OCI-LY7 (cell line): ENCODE measurements at regions of chr1 and their contacts with region 1.

Region 1: DNA sequence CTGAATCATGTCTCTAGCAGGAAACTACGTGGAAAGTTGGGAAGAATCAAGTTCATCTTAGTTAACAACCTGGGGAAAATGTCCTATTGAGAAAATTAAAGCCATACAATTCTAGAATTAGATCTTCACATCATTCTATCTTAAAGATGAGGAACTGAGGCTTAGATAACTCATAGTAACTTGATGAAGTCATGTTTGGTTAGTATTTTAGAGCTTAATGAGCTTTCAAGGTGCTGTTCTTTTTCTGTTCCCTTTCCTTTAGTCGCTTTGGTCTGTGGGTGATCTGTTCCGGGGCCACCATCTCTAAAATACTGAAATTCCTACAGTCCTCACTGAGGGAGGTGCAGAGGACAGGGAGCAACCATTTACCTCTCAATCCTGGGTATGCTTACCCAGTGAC is 4.3 kb upstream of the GLUL start:
- DNase-seq: no peak
- H3K4me3 ChIP-seq: no peak overlapping the region
- H3K27ac ChIP-seq: no peak overlapping the region
- H3K4me1 ChIP-seq: no peaks in the 10 kb centered on the region
- CTCF ChIP-seq: no peak

Region 2: GRCh38 chr1:182084487-182085316 is 311.2 kb before region 1 on chr1:
- CTCF ChIA-PET with region 1: interaction called, 5 read pairs
- POLR2A ChIA-PET with region 1: no interaction called
- intact Hi-C with region 1: loop called (anchors 1 kb)
- DNase-seq: peak; percentile 47
- H3K4me3 ChIP-seq: no peak overlapping the region
- H3K27ac ChIP-seq: no peak overlapping the region
- H3K4me1 ChIP-seq: no peaks in the 10 kb centered on the region
- CTCF ChIP-seq: peak; percentile 69

Region 3: GRCh38 chr1:182143154-182143657 is 252.7 kb before region 1 on chr1:
- CTCF ChIA-PET with region 1: interaction called, 5 read pairs
- POLR2A ChIA-PET with region 1: interaction called, 5 read pairs
- intact Hi-C with region 1: loop called (anchors 1 kb)
- DNase-seq: peak; percentile 77
- H3K4me3 ChIP-seq: no peak overlapping the region
- H3K27ac ChIP-seq: no peak overlapping the region
- H3K4me1 ChIP-seq: no peaks in the 10 kb centered on the region
- CTCF ChIP-seq: peak; percentile 96